ENCODE measurements at regions of chr19 and their contacts with region 1.

Region 1: DNA sequence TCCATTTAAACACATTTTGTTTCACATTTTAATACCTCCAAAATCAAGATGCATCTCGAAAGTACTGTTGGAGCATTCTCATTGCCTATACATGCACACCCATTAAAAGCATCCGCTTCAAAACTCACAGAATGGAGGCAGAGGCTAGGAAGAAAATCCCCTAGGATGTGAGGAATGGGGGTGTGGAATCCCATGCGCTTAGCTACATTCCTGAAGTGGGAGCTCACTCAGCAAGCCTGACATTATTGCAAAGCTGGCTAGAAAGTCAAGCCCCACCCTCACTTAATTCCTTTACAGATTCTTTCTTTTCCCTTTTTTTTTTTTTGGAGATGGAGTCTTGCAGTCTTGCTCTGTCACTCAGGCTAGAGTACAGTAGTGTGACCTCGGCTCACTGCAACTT is 4.6 kb upstream of the FAM32A start:
- DNase-seq: no peak
- H3K4me3 ChIP-seq: no peak overlapping the region
- H3K27ac ChIP-seq: no peak overlapping the region
- H3K4me1 ChIP-seq: peaks cover 15% of the 10 kb centered on the region
- H3K27me3 ChIP-seq: peaks cover 51% of the 10 kb centered on the region
- CTCF ChIP-seq: no peak

Region 2: GRCh38 chr19:16041299-16041990 is 139.2 kb before region 1 on chr19:
- intact Hi-C with region 1: loop called (anchors 5 kb)
- DNase-seq: peak; percentile 81
- H3K4me3 ChIP-seq: peak overlapping the region; percentile 35
- H3K27ac ChIP-seq: no peak overlapping the region
- H3K4me1 ChIP-seq: peaks cover 6% of the 10 kb centered on the region
- H3K27me3 ChIP-seq: peaks cover 25% of the 10 kb centered on the region
- CTCF ChIP-seq: peak; percentile 98

Region 3: DNA sequence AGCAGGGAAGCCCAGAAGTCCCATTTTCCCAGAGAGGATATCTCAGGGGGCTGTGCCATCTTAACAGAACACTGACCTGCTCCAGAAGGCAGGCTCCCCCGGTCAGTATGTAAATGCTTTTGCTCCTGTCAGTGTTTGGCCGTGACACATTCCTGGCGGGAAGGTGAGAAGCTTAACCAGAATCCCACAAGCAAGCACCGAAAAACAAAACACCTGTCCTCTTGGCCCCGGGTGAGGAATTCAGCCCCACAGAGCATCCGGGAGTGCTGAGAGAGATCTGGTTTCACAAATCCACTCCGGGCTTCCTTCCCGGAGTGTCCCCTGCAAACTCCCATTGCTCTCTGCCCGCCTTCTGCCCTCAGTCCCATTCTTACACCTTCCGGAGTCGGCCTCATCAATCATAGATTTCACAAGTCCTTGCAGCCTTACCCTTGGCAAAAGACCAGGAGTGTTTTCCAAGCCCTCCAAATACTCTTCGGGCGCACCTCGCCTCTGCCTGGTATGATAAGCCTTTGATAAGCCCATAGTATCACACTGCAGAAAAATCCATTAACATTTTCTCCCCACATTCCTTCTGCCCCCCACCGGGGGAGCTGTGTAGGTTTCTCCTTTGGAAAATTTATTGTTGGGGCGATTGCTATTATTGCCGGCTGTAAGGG is 92.1 kb before region 1 on chr19:
- intact Hi-C with region 1: no loop called
- DNase-seq: no peak
- H3K4me3 ChIP-seq: no peak overlapping the region
- H3K27ac ChIP-seq: no peak overlapping the region
- H3K4me1 ChIP-seq: peaks cover 37% of the 10 kb centered on the region
- H3K27me3 ChIP-seq: no peaks in the 10 kb centered on the region
- CTCF ChIP-seq: no peak

Measured in left ventricle myocardium inferior (tissue), 1 donor.